ENCODE measurements at regions of chr6 and their contacts with region 1.

Region 1: DNA sequence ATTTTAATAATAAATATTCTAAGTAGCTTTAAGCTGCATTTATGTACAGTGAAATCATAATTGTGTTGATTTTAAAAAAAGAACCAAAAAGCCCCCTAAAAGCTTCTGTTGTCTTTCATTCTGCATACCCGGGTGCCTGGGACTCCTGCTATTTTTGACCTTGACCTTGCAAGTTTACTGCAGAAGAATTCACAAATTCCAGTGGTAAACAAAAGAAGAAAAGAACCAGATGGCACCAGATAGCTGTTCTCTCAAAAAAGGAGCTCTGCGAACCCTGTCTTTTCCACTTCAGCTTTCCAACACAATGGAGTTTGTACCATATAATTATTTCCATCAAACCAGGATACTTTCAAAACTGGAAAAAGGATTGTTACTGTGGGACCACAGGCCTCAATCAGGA is 363.3 kb downstream of the SMOC2 start:
- DNase-seq: no peak
- H3K4me3 ChIP-seq: no peak overlapping the region
- H3K27ac ChIP-seq: no peak overlapping the region
- H3K4me1 ChIP-seq: peaks cover 0 to 2% (median 0%) of the 10 kb centered on the region in 4 experiments; a peak in 1 of 7 replicates
- H3K27me3 ChIP-seq: peaks cover 0 to 4% (median 0%) of the 10 kb centered on the region in 4 experiments; a peak in 2 of 7 replicates
- CTCF ChIP-seq: no peak
- EP300 ChIP-seq: no peak
- POLR2A ChIP-seq: no peak
- RAD21 ChIP-seq: no peak

Region 2: GRCh38 chr6:168590406-168590805 is 213.9 kb before region 1 on chr6:
- CTCF ChIA-PET with region 1: no interaction called
- POLR2A ChIA-PET with region 1: no interaction called
- DNase-seq: no peak
- H3K4me3 ChIP-seq: no peak overlapping the region
- H3K27ac ChIP-seq: no peak overlapping the region
- H3K4me1 ChIP-seq: peaks cover 0 to 3% (median 1%) of the 10 kb centered on the region in 4 experiments; a peak in 3 of 7 replicates
- H3K27me3 ChIP-seq: no peaks in the 10 kb centered on the region
- CTCF ChIP-seq: no peak
- EP300 ChIP-seq: no peak
- POLR2A ChIP-seq: no peak
- RAD21 ChIP-seq: no peak

Region 3: GRCh38 chr6:168815229-168815628 is 10.9 kb after region 1 on chr6:
- CTCF ChIA-PET with region 1: interaction called, 18 read pairs
- POLR2A ChIA-PET with region 1: no interaction called
- DNase-seq: no peak
- H3K4me3 ChIP-seq: no peak overlapping the region
- H3K27ac ChIP-seq: no peak overlapping the region
- H3K4me1 ChIP-seq: no peaks in the 10 kb centered on the region
- H3K27me3 ChIP-seq: no peaks in the 10 kb centered on the region
- CTCF ChIP-seq: peak; percentile 42 to 80 (median 74)
- EP300 ChIP-seq: no peak
- POLR2A ChIP-seq: no peak
- RAD21 ChIP-seq: peak; percentile 47 to 53; a peak in 3 of 4 replicates

Region 4: DNA sequence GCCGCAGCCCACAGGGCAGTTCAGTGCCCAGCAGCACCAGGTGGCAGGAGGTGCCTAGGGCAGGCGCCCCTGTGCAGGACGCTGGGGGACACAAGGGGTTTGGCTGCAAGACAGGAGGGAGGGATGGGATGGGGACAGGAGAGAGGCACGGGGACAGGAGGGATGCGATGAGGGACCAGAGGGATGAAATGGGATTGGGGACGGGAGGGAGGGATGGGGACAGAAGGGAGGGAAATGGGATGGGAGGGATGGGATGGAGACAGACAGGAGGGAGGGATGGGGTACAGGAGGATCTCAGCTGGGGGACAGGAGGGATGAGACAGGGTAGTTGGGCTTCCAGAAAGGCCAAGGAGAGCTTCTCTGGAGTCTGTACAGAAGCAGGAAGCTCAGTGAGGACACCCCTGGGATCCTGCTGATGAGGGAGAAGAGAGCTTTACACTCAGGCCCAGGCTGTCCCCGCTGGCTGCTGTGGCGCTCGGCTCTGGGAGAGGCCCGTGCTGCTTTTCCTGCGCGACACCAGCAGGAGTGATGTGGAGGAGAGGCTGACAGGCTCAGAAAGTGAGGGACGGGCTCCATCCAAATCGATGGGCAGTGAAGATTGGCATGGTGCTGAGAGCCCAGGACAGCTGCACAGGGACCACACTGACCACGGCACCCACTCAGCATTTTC is 37.4 kb after region 1 on chr6:
- CTCF ChIA-PET with region 1: no interaction called
- POLR2A ChIA-PET with region 1: no interaction called
- DNase-seq: no peak
- H3K4me3 ChIP-seq: no peak overlapping the region
- H3K27ac ChIP-seq: no peak overlapping the region
- H3K4me1 ChIP-seq: peaks cover 0 to 12% (median 9%) of the 10 kb centered on the region in 4 experiments; a peak in 5 of 7 replicates
- H3K27me3 ChIP-seq: no peaks in the 10 kb centered on the region
- CTCF ChIP-seq: 0 out of 4 replicates have a peak, but pooled peaks of 1 of the 3 experiments have one; percentile 9
- EP300 ChIP-seq: no peak
- POLR2A ChIP-seq: no peak
- RAD21 ChIP-seq: 0 out of 4 replicates have a peak, but pooled peaks of 1 of the 2 experiments have one; percentile 12

Measured in H1 (cell line).